ENCODE measurements at regions of chr16 and their contacts with region 1.

Region 1: GRCh38 chr16:57042157-57043111 is 49.9 kb upstream of the CPNE2 start:
- DNase-seq: peak; percentile 64
- ATAC-seq: peak; percentile 40
- H3K4me3 Mint-ChIP-seq: peak overlapping the region; percentile 80
- H3K27ac Mint-ChIP-seq: peak overlapping the region; percentile 98
- H3K4me1 Mint-ChIP-seq: peaks cover 64% of the 10 kb centered on the region
- H3K27me3 Mint-ChIP-seq: no peaks in the 10 kb centered on the region

Region 2: DNA sequence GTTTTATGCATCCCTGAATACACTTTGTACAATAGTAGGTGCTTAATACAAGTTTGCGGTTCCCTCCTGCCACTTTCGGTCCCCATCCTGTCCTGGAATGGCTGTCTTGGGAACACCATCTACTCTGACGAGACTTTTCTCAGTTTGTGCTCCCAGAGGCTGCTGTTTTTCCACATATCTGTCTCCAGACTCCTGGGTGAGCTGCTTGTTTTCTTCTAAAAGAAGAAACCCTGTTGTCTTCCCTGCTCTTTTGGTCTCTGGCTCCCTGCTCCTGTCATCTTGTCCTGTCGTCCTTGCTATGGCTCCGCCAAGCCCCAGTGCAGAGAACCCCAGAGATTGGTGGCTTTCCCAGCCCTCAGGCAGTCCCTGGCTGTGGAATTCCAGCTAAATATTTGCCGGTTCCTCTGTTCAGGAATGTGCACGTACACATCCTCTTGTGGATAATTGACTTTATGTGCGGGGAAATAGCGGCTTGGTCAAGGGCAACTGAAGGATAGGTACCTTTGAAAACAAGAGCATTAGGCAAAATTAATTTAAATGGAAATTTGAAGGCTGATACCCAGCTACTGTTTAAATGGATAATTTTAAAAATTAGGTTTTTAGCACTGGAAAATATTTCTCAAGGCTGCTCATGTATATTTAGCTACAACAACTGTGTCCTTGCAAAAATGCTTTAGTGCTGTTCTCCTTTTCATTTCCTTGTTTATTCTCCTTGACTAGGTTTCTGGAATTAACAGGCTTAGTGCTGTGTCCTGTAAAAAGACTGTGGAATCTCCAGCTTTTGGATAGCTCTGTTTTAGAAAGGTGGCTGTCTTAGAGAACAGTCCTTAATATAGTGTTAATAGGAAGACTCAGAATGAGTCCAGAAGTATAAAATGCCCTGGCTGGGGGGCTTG is 227.6 kb before region 1 on chr16:
- POLR2A ChIA-PET with region 1: no interaction called
- DNase-seq: no peak
- ATAC-seq: no peak
- H3K4me3 Mint-ChIP-seq: no peak overlapping the region
- H3K27ac Mint-ChIP-seq: no peak overlapping the region
- H3K4me1 Mint-ChIP-seq: no peaks in the 10 kb centered on the region
- H3K27me3 Mint-ChIP-seq: no peaks in the 10 kb centered on the region

Region 3: DNA sequence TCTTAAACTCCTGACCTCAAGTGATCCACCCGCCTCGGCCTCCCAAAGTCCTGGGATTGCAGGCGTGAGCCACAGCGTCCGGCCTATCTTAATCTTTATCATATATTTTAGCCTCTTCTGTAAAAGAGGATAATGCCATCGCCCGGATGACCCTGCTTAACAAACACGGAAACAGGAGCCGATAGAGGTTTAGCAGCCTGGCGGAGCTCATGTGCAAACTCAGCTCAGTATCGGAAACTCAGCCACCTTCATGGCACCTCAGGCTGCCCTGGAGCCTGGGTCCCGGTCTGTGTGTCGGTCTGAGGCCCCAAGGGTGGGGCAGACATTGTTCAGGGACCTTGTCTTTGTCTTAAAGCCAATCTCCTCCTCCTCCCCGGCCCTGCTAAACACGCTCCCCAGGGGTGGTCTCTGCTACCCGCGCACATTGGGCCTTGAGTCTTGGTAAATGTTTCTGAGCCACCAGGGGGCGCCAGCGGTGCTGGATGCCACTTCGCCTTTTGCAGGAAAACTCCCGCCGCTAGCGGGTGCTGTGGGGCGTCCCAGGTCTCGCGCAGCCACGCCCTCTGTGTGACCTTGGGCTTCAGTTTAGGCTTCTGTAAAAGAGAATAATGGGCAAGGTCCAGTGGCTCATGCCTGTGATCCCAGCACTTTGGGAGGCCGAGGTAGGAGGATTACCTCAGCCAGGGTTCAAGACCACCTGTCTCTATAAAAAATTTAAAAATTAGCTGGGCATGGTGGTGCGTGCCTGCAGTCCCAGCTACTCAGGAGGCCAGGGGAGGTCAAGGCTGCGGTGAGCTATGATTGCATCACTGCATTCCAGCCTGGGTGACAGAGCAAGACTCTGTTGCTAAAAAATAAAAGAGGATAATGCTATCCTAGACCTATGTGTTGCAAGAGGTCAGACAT is 77.9 kb before region 1 on chr16:
- POLR2A ChIA-PET with region 1: interaction called, 26 read pairs
- DNase-seq: peak; percentile 99
- ATAC-seq: peak; percentile 79
- H3K4me3 Mint-ChIP-seq: no peak overlapping the region
- H3K27ac Mint-ChIP-seq: peak overlapping the region; percentile 87
- H3K4me1 Mint-ChIP-seq: peaks cover 21% of the 10 kb centered on the region
- H3K27me3 Mint-ChIP-seq: peaks cover 7% of the 10 kb centered on the region

Region 4: DNA sequence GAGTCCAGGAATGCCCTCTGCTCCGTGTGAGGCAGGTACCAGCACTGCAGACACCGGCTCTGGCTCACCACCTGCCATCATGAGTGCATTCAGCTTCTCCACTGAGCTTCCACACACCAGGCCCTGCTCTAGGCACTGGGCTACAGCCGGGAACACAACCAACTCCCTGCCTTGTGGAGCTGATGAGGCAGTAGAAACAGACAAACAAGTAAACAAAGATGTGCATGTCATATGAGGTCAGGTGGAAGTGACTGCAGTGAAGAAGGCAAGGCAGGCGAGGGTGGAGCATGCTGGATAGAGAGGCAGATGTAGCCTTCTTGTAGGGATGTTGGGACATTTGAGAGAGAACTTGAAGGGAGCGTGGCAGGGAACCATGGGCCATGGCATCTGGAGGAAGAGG is 48.1 kb before region 1 on chr16:
- POLR2A ChIA-PET with region 1: interaction called, 75 read pairs
- DNase-seq: peak; percentile 39
- ATAC-seq: no peak
- H3K4me3 Mint-ChIP-seq: peak overlapping the region; percentile 72
- H3K27ac Mint-ChIP-seq: peak overlapping the region; percentile 82
- H3K4me1 Mint-ChIP-seq: peaks cover 59% of the 10 kb centered on the region
- H3K27me3 Mint-ChIP-seq: no peaks in the 10 kb centered on the region

Region 5: GRCh38 chr16:57000271-57001025 is 42.0 kb before region 1 on chr16:
- POLR2A ChIA-PET with region 1: interaction called, 15 read pairs
- DNase-seq: peak; percentile 39
- ATAC-seq: peak; percentile 48
- H3K4me3 Mint-ChIP-seq: peak overlapping the region; percentile 29
- H3K27ac Mint-ChIP-seq: peak overlapping the region; percentile 92
- H3K4me1 Mint-ChIP-seq: peaks cover 81% of the 10 kb centered on the region
- H3K27me3 Mint-ChIP-seq: no peaks in the 10 kb centered on the region

Region 6: GRCh38 chr16:57023541-57024249 is 18.7 kb before region 1 on chr16:
- POLR2A ChIA-PET with region 1: interaction called, 63 read pairs
- DNase-seq: peak; percentile 73
- ATAC-seq: peak; percentile 77
- H3K4me3 Mint-ChIP-seq: peak overlapping the region; percentile 66
- H3K27ac Mint-ChIP-seq: peak overlapping the region; percentile 84
- H3K4me1 Mint-ChIP-seq: peaks cover 67% of the 10 kb centered on the region
- H3K27me3 Mint-ChIP-seq: no peaks in the 10 kb centered on the region

Region 7: DNA sequence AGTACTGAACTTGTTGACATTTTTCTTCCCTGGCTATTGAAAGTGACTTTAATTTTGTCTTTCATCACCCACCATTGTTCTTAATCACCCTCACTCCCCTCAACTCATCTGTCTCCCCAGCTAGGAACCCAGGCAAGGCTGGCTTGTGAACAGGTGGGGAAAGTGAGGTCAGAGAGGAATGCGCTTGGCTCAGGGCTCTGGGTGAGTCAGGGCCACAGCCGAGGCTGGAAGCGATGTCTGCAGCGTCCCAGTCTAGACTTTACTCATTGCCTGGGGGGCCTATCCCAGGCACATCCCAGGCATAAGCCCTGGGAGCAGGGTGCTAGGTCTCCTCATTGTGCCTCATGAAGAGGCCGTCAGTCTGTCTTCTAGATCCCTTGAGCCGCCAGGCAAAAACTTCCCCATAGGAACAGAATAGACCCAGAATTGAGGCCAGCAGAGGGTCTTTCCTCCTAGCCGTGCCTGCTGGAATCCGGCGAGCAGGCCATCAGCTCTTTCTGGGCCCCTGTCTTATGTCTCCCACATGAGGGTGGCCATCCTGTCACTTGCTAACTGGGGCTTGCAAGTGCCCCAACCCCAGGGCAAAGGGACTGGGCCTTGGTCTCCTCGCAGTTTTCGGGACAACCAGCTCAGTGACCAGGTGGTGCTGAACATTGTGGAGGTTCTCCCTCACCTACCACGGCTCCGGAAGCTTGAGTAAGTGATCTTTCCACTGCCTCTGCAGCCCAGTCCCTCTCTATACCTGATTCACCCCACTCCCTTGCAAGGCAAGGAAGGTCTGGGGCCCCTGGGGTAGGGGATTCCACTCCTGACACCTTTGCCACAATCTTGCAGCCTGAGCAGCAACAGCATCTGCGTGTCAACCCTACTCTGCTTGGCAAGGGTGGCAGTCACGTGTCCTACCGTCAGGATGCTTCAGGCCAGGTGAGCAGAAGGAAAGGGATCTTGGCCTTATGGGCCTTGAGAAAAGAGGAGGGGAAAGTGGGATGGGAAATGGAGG is 13.0 kb before region 1 on chr16:
- POLR2A ChIA-PET with region 1: interaction called, 63 read pairs
- DNase-seq: no peak
- ATAC-seq: no peak
- H3K4me3 Mint-ChIP-seq: no peak overlapping the region
- H3K27ac Mint-ChIP-seq: no peak overlapping the region
- H3K4me1 Mint-ChIP-seq: peaks cover 42% of the 10 kb centered on the region
- H3K27me3 Mint-ChIP-seq: no peaks in the 10 kb centered on the region

Measured in activated naive CD8-positive, alpha-beta T cell treated with anti-CD3 and anti-CD28 coated beads, Interleukin-2, amount 10 ng/mL, durations not matched to agents 7 days and 5 days (primary cell).